Mammary epithelial cell (primary cell): ENCODE measurements at regions of chr18 and their contacts with region 1.

Region 1: DNA sequence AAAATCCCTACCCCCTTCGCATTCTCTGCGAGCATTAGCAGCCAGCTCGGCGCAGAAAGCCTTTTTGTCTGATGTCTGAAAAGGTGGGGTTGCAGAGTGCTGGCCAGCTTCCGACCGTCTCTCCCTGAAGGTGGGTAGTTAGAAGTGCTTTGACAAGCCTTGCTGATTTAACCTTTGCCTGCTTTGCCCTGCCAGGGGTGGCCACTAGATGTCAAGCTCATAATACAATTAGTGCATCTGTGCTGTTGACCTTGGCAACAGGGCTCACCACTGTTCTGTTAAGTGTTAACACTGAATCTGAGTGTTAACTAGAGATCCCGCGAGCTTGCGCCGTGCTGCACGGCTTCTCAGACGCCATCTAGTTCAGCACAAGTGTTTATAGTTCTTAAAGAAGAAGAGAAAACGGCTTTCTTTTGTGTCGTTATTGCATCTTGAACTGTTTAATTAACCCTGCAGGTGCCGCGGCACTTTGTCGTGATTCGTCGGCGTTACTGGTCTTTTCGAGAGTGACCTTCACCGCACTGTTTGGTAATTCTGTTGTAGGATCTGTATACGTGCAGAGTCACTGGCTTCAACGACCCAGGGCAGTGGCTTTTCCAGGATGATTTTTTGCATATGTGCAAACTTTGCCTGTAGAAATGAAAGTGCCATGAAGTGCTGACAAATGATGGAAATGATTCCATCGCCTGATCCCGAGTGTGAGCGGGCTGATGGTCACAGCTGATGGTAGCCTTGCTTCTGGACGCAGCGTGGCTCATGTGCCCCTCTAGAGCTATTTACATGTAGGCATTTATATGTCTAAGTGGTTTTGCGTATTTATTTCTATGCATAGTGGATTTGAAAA is 5.5 kb downstream of the SALL3 start:
- DNase-seq: peak; percentile 29
- H3K4me3 ChIP-seq: no peak overlapping the region
- H3K27ac ChIP-seq: no peak overlapping the region
- H3K4me1 ChIP-seq: no peaks in the 10 kb centered on the region
- H3K27me3 ChIP-seq: peaks cover 26% of the 10 kb centered on the region
- CTCF ChIP-seq: peak; percentile 38 to 63

Region 2: GRCh38 chr18:79068937-79069791 is 84.0 kb after region 1 on chr18 and contains the start of gene ATP9B:
- CTCF ChIA-PET with region 1: no interaction called
- dilution Hi-C with region 1: no loop called
- in situ Hi-C with region 1: no loop called
- intact Hi-C with region 1: loop called (anchors 5 kb)
- DNase-seq: peak; percentile 98
- H3K4me3 ChIP-seq: peak within 1 kb of the TSS; percentile 57 to 92 (median 92)
- H3K27ac ChIP-seq: peak within 1 kb of the TSS; percentile 65
- H3K4me1 ChIP-seq: peaks cover 5% of the 10 kb centered on the region
- H3K27me3 ChIP-seq: no peaks in the 10 kb centered on the region
- CTCF ChIP-seq: no peak
- total RNA-seq, gene ATP9B: 17.5 to 19.8 TPM

Region 3: DNA sequence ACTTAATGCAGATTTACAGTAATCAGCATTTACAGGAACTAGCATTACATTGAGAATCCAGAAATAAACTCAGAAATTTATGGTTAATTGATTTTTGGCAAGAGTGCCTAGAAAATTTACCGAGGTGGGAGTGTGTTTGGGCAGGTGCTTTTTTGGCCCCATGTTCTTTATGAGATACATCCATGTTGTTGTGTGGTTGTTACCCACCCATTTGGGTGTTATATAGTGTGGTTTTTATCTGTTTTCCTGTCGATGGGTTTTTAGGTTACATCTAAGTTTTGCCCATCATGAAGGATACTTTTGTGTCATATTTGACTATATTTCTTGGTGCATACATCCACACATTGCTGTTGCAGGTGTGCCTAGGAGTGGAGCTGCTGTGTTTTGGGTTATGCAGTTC is 166.0 kb after region 1 on chr18:
- CTCF ChIA-PET with region 1: no interaction called
- dilution Hi-C with region 1: no loop called
- in situ Hi-C with region 1: no loop called
- intact Hi-C with region 1: no loop called
- DNase-seq: no peak
- H3K4me3 ChIP-seq: no peak overlapping the region
- H3K27ac ChIP-seq: no peak overlapping the region
- H3K4me1 ChIP-seq: no peaks in the 10 kb centered on the region
- H3K27me3 ChIP-seq: no peaks in the 10 kb centered on the region
- CTCF ChIP-seq: no peak

Region 4: DNA sequence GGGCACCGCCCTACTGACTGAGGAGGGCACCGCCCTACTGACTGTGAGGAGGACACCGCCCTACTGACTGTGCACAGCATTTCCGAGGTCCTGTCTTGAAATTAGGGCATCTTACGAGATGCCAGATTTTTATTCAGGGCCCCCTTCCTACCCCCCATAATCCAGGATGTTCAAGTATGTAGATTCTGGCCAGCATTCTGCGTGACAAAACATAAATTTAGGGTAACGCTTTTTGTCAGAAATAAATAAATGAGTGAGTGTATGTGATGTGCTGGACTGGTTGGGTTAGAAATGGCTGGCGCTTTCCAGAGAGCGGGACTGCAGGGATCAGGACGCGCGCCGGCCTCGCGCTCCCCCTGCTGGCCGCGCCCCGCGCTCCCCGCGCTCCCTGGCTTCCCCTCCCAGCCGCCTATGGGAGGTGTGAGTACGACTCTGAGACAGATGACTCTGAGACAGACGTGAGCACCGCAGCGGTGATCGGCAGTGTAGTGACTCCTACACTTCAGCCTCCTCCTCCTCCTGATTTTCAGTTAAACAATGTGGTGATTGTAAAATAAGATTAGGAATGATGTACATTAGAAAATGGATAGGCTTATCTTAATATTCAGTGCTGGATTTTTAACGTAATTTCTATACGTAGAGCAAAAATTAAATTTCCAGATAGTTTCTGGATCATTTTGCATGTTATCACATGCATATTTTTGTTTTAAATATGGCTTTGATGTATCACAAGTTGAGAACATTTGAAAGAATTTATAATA is 261.4 kb after region 1 on chr18:
- CTCF ChIA-PET with region 1: no interaction called
- dilution Hi-C with region 1: no loop called
- in situ Hi-C with region 1: loop called in 1 of 2 experiments (anchors 25 kb)
- intact Hi-C with region 1: loop called (anchors 1 kb)
- DNase-seq: peak; percentile 78
- H3K4me3 ChIP-seq: peak overlapping the region in 1 of 3 experiments; percentile 12
- H3K27ac ChIP-seq: peak overlapping the region; percentile 27
- H3K4me1 ChIP-seq: peaks cover 7% of the 10 kb centered on the region
- H3K27me3 ChIP-seq: no peaks in the 10 kb centered on the region
- CTCF ChIP-seq: peak; percentile 86 to 99

Region 5: GRCh38 chr18:79366177-79367094 is 381.3 kb after region 1 on chr18:
- CTCF ChIA-PET with region 1: no interaction called
- dilution Hi-C with region 1: no loop called
- in situ Hi-C with region 1: no loop called
- intact Hi-C with region 1: no loop called
- DNase-seq: no peak
- H3K4me3 ChIP-seq: no peak overlapping the region
- H3K27ac ChIP-seq: no peak overlapping the region
- H3K4me1 ChIP-seq: peaks cover 3% of the 10 kb centered on the region
- H3K27me3 ChIP-seq: no peaks in the 10 kb centered on the region
- CTCF ChIP-seq: no peak

Region 6: GRCh38 chr18:79528846-79529245 is 543.7 kb after region 1 on chr18:
- CTCF ChIA-PET with region 1: no interaction called
- dilution Hi-C with region 1: no loop called
- in situ Hi-C with region 1: no loop called
- intact Hi-C with region 1: loop called (anchors 5 kb)
- DNase-seq: peak; percentile 20
- H3K4me3 ChIP-seq: no peak overlapping the region
- H3K27ac ChIP-seq: no peak overlapping the region
- H3K4me1 ChIP-seq: no peaks in the 10 kb centered on the region
- H3K27me3 ChIP-seq: no peaks in the 10 kb centered on the region
- CTCF ChIP-seq: peak; percentile 51 to 53